Activated naive CD4-positive, alpha-beta T cell treated with anti-CD3 and anti-CD28 coated beads for 36 hours (primary cell): ENCODE measurements at regions of chr17 and their contacts with region 1.

Region 1: DNA sequence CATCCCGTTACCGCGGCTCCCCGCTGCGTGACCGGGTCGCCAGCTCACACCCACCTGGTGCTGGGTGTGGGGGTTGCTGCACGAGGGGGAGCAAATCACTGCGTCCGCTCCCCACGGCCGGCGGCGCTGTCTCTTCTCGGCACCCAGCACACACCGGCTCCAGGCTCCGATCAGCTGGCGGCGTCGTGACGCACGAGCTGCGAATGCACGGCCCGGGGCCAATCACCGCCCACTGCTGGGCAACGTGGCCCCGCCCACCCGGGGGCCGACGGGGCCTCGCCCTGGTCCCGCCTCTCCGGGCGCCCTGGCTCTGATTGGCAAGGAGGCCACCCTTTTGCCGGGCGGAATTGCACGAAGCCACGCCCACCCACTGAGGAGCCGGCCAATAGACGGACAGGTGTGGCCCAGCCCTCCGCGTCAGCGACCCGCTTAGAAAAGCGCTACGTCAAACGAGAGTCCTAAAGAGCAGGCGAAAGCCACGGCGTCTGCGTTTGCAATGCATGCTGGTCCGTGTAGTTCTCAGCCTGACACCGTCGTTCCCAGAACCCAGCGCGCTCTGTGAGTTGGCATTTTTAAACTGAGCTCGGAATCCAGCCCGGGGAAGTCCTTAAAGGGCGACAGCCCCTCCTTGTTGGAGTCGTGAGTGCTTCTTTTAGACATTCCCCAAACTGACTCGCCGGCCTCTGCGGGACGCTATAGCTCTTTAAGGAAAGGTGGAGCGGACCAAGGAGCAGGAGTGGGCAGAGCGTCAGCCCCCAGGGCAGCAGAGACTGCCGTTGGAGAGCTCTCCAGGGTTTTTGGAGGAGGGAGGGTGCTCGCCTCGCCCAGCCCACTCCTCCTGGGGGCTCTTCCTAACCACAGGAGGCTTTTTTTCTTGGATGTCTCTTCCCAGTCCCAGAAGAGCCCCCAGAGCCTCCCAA is 6.2 kb upstream of the TLCD2 start:
- DNase-seq: peak; percentile 100
- H3K4me3 Mint-ChIP-seq: peak overlapping the region; percentile 88
- H3K27ac Mint-ChIP-seq: peak overlapping the region; percentile 97
- H3K4me1 Mint-ChIP-seq: peaks cover 22% of the 10 kb centered on the region
- H3K27me3 Mint-ChIP-seq: peaks cover 3% of the 10 kb centered on the region

Region 2: DNA sequence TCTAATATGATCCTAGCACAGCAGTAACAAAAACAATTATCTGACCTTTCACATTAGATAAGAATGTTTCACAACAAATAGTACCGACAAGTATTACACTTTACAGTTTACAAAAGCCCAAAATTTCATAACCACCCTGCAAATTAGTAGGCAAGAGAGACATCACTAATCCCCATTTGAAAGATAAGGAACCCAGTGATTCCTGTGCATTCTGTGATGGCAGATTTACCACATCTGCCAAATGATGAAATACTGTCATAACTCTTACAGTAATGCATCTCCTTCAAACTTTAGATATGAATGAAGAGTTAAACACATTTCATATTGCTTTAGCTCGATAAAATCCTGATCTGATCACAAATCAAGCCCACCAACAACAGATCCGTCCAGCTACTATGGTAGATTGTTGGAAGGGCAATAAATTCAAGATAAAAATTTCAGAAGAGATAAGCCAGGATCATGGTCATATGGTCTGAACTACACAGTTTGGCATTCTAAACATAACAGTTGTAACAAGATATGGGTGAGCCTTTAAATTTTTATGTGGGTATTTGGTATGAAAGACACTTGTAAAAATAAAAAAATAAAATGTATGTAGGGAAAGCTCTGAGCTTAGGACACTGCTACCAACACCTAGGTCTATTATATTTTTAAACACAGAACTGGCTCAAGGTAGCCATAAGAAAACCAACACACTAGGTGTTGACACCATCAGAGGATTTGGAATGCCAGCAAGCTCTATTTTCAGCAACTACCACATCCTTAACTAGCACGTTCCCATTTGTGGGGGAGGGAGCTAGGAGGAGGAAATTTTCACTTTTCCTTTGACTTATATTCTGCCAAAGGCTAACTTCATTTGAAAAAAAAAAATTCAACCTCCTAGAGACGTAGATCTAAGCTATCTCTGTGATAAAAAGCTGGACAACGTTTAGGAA is 325.6 kb before region 1 on chr17:
- CTCF ChIA-PET with region 1: no interaction called
- intact Hi-C with region 1: no loop called
- DNase-seq: no peak
- H3K4me3 Mint-ChIP-seq: no peak overlapping the region
- H3K27ac Mint-ChIP-seq: peak overlapping the region; percentile 61
- H3K4me1 Mint-ChIP-seq: peaks cover 79% of the 10 kb centered on the region
- H3K27me3 Mint-ChIP-seq: no peaks in the 10 kb centered on the region

Region 3: GRCh38 chr17:1561400-1562175 is 154.7 kb before region 1 on chr17:
- CTCF ChIA-PET with region 1: no interaction called
- intact Hi-C with region 1: loop called (anchors 10 kb)
- DNase-seq: peak; percentile 34
- H3K4me3 Mint-ChIP-seq: peak overlapping the region; percentile 82
- H3K27ac Mint-ChIP-seq: peak overlapping the region; percentile 71
- H3K4me1 Mint-ChIP-seq: peaks cover 40% of the 10 kb centered on the region
- H3K27me3 Mint-ChIP-seq: no peaks in the 10 kb centered on the region

Region 4: DNA sequence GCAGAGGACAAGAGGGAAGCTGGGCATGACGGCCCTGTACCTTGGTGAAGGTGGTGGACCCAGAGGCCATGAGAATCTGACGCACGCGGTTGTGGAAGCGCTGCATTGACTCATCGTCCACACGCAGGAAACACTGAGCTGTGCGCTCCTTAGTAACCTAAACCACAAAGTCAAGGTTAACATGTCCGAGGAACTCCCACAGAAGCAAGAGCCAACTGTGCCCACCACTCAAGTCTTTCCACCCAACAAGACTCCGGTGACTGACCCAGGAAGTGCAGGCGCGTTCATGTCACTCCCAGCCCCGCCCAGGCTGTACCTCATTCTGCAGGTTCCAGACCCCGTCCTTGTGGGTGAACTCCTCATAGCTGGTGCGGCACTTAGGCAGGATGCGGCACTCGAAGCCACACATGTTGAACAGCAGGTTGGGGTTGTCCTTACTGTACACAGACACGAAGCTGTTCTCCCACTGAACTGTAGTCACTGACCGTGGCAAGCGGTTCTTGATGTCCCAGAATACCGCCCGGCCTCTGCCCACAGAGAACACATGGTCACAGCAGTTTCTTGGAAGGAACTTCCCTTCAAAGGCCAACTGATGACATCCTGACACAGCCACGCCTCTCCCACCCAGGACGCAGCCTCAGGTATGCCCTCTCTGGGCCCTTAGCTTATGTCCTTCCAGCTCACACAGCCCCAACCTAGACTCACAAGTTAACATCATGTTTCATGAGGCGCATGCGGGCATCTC is 43.1 kb before region 1 on chr17:
- CTCF ChIA-PET with region 1: interaction called, 6 read pairs
- intact Hi-C with region 1: loop called (anchors 2 kb)
- DNase-seq: no peak
- H3K4me3 Mint-ChIP-seq: no peak overlapping the region
- H3K27ac Mint-ChIP-seq: no peak overlapping the region
- H3K4me1 Mint-ChIP-seq: peaks cover 8% of the 10 kb centered on the region
- H3K27me3 Mint-ChIP-seq: no peaks in the 10 kb centered on the region

Region 5: DNA sequence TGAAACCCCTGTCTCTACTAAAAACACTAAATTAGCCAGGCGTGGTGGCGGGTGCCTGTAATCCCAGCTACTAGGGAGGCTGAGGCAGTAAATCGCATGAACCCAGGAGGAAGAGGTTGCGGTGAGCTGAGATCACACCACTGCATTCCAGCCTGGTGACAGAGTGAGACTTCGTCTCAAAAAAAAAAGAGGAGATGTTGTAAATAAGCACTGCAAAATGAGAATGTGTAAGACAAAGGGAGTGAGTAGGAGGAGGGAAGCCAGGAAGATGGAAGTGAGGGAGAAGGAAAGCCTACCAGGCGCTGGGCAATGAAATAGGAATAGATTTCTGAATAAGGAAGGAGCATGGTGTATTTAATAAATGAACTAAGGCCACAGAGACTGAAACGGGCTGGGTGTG is 23.0 kb before region 1 on chr17:
- CTCF ChIA-PET with region 1: no interaction called
- intact Hi-C with region 1: no loop called
- DNase-seq: no peak
- H3K4me3 Mint-ChIP-seq: no peak overlapping the region
- H3K27ac Mint-ChIP-seq: no peak overlapping the region
- H3K4me1 Mint-ChIP-seq: no peaks in the 10 kb centered on the region
- H3K27me3 Mint-ChIP-seq: no peaks in the 10 kb centered on the region

Region 6: GRCh38 chr17:1829592-1830257 is 113.4 kb after region 1 on chr17 and contains the starts of genes RPA1 and SMYD4:
- CTCF ChIA-PET with region 1: interaction called, 7 read pairs
- intact Hi-C with region 1: loop called (anchors 1 kb)
- DNase-seq: peak; percentile 89
- H3K4me3 Mint-ChIP-seq: peak within 1 kb of the TSS; percentile 93
- H3K27ac Mint-ChIP-seq: peak within 1 kb of the TSS; percentile 85
- H3K4me1 Mint-ChIP-seq: peaks cover 61% of the 10 kb centered on the region
- H3K27me3 Mint-ChIP-seq: no peaks in the 10 kb centered on the region
- total RNA-seq, gene RPA1: 177 to 188 TPM
- total RNA-seq, gene SMYD4: 18.7 to 22.0 TPM

Region 7: DNA sequence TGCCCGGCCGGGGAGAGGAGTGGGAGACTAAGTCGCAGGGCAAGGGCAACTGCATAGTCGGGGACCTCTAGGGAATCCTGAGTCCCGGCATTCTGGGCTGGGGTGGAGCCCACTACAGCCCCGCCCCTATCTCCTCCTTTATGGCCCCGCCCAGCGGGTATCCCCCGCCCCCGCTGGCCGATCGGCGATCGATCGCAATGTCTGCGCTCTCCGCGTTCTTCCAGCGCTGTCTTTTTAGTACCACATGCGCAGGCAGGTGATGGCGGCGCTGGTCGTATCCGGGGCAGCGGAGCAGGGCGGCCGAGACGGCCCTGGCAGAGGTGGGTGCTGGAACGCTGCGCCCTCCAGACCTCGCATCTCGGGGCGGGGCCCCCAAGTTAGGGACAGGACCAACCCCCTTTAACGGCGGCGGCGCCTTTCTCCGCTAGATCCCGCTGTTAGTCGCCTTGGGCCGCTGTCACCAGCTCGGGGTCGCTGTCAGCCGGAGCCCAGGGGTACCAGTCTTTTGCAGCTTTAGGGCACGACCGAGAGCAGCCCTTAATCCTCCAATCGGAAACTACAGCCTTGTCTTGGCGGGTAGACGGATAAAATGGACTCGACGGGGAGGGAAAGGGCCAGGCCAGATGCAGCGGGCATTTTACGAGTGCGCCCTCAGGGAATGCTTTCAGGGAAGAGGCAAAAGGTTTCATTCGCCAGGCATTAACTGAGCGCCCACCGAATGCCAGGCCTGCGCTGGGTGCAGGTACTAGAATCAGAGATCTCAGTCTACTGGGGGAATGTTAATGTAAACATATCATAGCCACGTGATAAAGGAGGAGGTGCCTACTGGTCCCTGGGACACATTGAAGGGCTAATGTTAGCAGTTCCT is 313.8 kb after region 1 on chr17 and contains the start of gene DPH1:
- CTCF ChIA-PET with region 1: interaction called, 11 read pairs
- intact Hi-C with region 1: loop called (anchors 1 kb)
- DNase-seq: peak; percentile 91
- H3K4me3 Mint-ChIP-seq: peak within 1 kb of the TSS; percentile 94
- H3K27ac Mint-ChIP-seq: peak within 1 kb of the TSS; percentile 61
- H3K4me1 Mint-ChIP-seq: peaks cover 29% of the 10 kb centered on the region
- H3K27me3 Mint-ChIP-seq: peaks cover 24% of the 10 kb centered on the region
- total RNA-seq, gene DPH1: 31.1 to 34.1 TPM

Region 8: DNA sequence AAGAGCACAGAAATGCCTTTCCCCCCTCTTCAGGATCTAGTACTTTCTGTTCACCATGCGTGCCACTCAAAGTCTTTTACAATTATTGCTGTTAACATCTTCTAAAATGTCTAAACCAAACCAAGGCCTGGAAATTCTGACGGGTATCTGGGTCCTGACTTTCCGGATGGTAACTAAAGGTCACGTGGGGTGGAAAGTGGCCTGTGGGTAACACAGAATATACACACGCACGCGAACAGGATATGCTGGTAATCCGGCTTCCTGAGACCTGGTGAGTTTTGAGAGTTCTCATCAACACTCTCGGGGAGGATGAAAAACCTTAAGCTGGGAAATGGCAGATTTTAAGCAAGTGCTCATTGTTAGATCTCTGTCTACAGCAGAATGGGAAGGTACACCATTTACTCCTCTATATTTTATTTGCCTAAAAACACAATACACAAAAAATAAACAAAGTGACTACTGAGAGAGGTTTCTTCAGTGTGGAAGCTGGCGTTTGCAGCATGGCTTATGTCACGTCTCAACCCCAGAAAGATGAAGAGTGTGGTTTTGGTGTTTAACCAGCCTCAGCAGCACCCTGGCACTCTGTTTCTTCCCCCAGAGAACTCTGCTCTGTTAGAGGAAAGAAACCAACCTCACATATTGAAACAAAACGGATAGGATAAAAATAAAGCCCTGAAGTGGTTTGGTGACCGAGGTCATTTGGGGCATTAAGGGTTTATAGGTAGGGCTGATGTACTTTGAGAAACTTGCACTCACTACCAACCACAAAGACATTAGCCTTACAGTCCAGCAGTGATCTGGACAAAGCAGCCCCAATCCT is 549.9 kb after region 1 on chr17:
- CTCF ChIA-PET with region 1: no interaction called
- intact Hi-C with region 1: loop called (anchors 5 kb)
- DNase-seq: peak; percentile 94
- H3K4me3 Mint-ChIP-seq: peak overlapping the region; percentile 76
- H3K27ac Mint-ChIP-seq: peak overlapping the region; percentile 100
- H3K4me1 Mint-ChIP-seq: peaks cover 88% of the 10 kb centered on the region
- H3K27me3 Mint-ChIP-seq: no peaks in the 10 kb centered on the region